Caco-2 (cell line): ENCODE measurements at regions of chr10 and their contacts with region 1.

Region 1: DNA sequence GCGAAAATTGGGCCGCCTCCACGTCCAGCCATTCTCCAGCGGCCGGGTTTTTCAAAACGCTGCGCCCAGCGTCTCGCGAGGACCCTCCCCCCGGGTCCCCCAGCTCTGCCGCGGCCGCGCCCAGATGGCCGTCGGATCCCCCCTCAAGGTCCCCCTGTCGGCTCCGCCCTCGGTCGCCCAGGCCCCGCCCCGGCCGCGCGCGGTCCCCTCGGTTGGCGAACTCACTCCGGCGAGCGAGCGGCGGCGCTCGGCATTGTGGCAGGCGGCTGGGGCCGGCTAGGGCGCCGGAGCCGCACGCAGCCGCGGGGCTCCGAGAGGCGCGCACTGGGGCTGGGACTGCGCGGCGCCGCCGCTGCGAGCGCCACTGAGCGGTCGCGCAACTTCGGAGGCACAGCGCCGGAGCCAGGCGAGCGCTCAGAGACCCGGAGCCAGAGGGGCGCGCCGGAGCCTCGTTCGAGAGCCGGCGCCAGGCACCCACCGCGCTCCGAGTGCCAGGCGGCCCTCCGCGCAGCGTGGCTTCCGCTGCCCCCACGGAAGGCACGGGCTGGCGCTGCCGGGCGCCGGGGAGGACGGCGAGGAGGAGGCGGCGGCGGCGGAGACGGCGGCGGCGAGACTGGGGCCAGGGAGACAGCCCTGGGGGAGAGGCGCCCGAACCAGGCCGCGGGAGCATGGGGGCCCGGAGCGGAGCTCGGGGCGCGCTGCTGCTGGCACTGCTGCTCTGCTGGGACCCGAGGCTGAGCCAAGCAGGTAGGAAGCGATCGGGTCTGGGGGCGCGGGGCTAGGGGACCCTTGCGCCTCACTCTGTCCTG is at the start of gene UNC5B:
- DNase-seq: peak; percentile 94 to 99
- H3K4me3 ChIP-seq: peak within 1 kb of the TSS; percentile 66
- H3K4me3 Mint-ChIP-seq: peak within 1 kb of the TSS; percentile 81
- H3K27ac Mint-ChIP-seq: no peak within 1 kb of the TSS
- H3K4me1 ChIP-seq: peaks cover 27% of the 10 kb centered on the region
- H3K4me1 Mint-ChIP-seq: peaks cover 16% of the 10 kb centered on the region
- H3K27me3 ChIP-seq: peaks cover 17% of the 10 kb centered on the region
- H3K27me3 Mint-ChIP-seq: peaks cover 25% of the 10 kb centered on the region
- CTCF ChIP-seq: peak; percentile 55 to 62
- total RNA-seq, gene UNC5B: 16.2 and 22.4 TPM in 2 replicates

Region 2: DNA sequence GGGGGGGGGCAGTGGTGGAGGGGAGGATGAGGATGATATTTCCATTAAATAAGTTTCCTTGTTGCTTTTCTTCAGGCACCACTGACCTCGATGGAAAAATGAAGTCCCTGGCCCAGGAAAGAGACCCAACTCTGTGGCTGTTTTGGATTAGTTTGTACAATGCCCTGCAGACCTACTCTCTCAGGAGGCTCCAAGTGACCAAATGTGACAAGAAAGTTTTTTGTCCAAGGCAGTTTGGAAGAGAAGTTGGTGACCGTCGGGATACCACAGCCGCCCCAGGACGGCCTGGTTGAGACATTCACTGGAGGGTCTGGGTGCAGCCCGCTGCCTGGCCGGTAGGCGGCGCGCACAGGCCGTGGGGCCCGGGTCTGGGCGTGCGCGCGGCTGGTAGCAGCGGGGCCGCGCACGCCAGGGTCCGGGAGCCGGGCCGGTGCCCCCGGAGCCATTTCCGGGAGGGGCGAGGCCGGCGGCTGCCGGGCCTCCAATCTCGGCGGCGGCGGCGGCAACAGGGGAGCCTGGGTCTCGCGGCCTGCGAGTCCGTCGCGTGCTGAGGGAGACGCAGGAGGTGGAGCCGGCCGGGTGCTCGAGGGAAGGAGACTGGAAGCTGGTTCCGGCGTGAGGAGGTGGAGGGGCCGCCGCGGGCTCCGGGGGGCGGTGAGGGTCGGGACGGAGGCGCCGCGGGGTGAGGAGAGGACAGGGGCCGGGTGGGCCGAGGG is 396.9 kb before region 1 on chr10 and contains the start of gene SGPL1:
- CTCF ChIA-PET with region 1: no interaction called
- POLR2A ChIA-PET with region 1: no interaction called
- intact Hi-C with region 1: loop called (anchors 10 kb)
- DNase-seq: peak; percentile 92 to 98
- H3K4me3 ChIP-seq: peak within 1 kb of the TSS; percentile 93
- H3K4me3 Mint-ChIP-seq: peak within 1 kb of the TSS; percentile 96
- H3K27ac Mint-ChIP-seq: peak within 1 kb of the TSS; percentile 89
- H3K4me1 ChIP-seq: peaks cover 5% of the 10 kb centered on the region; the same call in 1 of the 2 replicates
- H3K4me1 Mint-ChIP-seq: peaks cover 7% of the 10 kb centered on the region
- H3K27me3 ChIP-seq: no peaks in the 10 kb centered on the region
- H3K27me3 Mint-ChIP-seq: no peaks in the 10 kb centered on the region
- CTCF ChIP-seq: peak; percentile 99 to 100
- total RNA-seq, gene SGPL1: 121 and 127 TPM in 2 replicates

Region 3: GRCh38 chr10:70925377-70926225 is 286.9 kb before region 1 on chr10:
- CTCF ChIA-PET with region 1: interaction called, 9 read pairs
- POLR2A ChIA-PET with region 1: no interaction called
- intact Hi-C with region 1: loop called (anchors 1 kb)
- DNase-seq: peak in 1 of 2 experiments; percentile 83
- H3K4me3 ChIP-seq: no peak overlapping the region
- H3K4me3 Mint-ChIP-seq: no peak overlapping the region
- H3K27ac Mint-ChIP-seq: no peak overlapping the region
- H3K4me1 ChIP-seq: no peaks in the 10 kb centered on the region
- H3K4me1 Mint-ChIP-seq: peaks cover 8% of the 10 kb centered on the region
- H3K27me3 ChIP-seq: peaks cover 4% of the 10 kb centered on the region; the same call in 1 of the 2 replicates
- H3K27me3 Mint-ChIP-seq: peaks cover 6% of the 10 kb centered on the region
- CTCF ChIP-seq: peak; percentile 99 to 100

Region 4: DNA sequence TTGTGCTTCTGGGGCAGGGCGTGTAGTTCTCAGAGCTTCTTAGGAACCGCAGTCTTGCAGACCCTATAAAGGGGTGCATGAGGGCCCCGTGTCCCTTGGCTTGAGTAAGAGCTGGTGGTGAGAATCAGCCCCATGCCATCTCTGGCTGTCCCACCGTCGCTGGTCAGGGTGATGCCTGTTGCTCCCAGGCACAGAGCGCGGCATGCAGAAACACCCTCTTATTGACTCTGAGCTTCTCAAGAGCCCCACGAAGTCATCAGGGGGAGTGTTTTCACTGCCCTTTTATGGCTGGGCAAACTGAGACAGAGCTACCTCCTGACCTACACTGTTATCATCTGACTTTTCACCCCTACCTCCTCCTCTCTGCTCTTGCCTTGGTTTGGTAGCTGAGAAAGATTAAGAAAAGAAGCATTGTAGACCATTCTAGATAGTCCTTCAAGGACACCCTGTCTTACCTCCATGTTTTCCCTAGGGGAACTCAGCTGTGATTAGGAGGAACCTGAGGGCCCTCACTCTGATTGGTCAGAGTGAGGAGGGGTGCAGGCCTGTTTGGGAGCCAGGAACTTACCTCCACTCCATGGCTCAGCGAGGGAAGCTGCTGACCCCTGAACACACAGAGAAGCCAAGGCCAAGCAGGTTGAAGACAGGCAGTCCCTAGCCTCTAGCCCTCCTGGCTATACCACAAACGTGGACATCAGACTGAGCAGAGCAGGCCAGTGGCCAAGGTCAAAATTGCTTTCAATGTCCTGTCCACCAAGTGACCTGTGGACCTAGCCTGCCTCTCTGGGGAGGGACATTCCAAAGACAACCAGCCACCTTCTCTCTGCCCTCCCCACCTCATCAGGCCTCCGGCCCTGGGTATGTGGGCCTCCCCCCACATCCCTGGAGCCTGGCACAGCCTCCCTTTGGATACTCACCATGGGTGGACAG is 17.5 kb after region 1 on chr10:
- CTCF ChIA-PET with region 1: interaction called, 11 read pairs
- POLR2A ChIA-PET with region 1: no interaction called
- intact Hi-C with region 1: no loop called
- DNase-seq: peak; percentile 51 to 79
- H3K4me3 ChIP-seq: no peak overlapping the region
- H3K4me3 Mint-ChIP-seq: no peak overlapping the region
- H3K27ac Mint-ChIP-seq: peak overlapping the region; percentile 12
- H3K4me1 ChIP-seq: peaks cover 49% of the 10 kb centered on the region
- H3K4me1 Mint-ChIP-seq: peaks cover 39% of the 10 kb centered on the region
- H3K27me3 ChIP-seq: no peaks in the 10 kb centered on the region
- H3K27me3 Mint-ChIP-seq: no peaks in the 10 kb centered on the region
- CTCF ChIP-seq: no peak

Region 5: GRCh38 chr10:71270301-71271220 is 58.0 kb after region 1 on chr10:
- CTCF ChIA-PET with region 1: interaction called, 9 read pairs
- POLR2A ChIA-PET with region 1: no interaction called
- intact Hi-C with region 1: loop called (anchors 1 kb)
- DNase-seq: peak; percentile 80 to 86
- H3K4me3 ChIP-seq: no peak overlapping the region
- H3K4me3 Mint-ChIP-seq: no peak overlapping the region
- H3K27ac Mint-ChIP-seq: peak overlapping the region; percentile 60
- H3K4me1 ChIP-seq: 0 out of 2 replicates have a peak, but pooled peaks cover 14% of the 10 kb centered on the region
- H3K4me1 Mint-ChIP-seq: peaks cover 19% of the 10 kb centered on the region
- H3K27me3 ChIP-seq: no peaks in the 10 kb centered on the region
- H3K27me3 Mint-ChIP-seq: no peaks in the 10 kb centered on the region
- CTCF ChIP-seq: peak; percentile 79 to 98